Activated B cell treated with CpG ODN at 0.5 μM for 24 hours (primary cell): ENCODE measurements at regions of chr3 and their contacts with region 1.

Region 1: DNA sequence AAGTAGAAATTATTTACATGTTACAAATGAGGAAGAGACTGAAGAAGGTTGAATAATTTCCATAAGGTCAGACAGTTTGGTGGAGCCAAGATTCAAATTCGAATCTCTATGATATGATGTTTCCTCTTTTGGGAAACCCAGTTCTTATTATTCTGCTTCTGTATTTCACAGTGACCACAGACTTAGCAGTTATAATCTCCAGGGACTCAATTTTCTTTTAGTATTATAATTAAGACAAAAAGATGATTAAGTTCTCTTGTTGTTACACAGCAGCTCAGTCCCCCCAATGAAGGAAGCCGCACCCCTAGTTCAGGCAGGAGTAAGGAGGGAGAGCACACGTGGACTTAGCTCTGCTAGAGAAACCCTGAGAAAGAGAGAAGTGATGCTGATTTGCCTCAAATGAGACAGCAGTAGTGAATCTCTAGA is 130.6 kb downstream of the CCNL1 start:
- DNase-seq: peak; percentile 19
- ATAC-seq: peak; percentile 92
- H3K4me3 Mint-ChIP-seq: peak overlapping the region; percentile 15
- H3K27ac Mint-ChIP-seq: peak overlapping the region; percentile 77
- H3K4me1 Mint-ChIP-seq: peaks cover 30% of the 10 kb centered on the region
- H3K27me3 Mint-ChIP-seq: peaks cover 2% of the 10 kb centered on the region
- CTCF ChIP-seq: no peak

Region 2: DNA sequence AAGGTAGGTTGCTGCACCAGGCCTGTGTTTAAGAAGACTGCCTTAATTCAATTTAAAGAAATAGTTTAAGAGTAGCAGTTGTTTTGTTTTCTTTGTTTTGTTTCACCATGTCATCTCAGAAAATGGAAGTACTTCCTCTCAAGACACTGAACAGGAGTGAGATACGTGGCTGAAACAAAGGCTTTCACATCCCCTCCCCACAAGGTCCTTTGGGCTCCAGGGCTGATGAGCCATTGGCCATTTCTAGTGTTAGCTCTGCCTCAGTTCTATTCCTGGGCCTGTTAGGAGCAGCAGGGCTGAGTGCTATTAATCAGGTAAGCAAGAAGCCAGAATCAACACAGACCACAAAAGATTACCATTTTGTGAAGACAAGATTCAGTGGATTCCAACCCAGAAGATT is 776.2 kb before region 1 on chr3:
- CTCF ChIA-PET with region 1: no interaction called
- POLR2A ChIA-PET with region 1: no interaction called
- intact Hi-C with region 1: no loop called
- DNase-seq: no peak
- ATAC-seq: no peak
- H3K4me3 Mint-ChIP-seq: no peak overlapping the region
- H3K27ac Mint-ChIP-seq: no peak overlapping the region
- H3K4me1 Mint-ChIP-seq: no peaks in the 10 kb centered on the region
- H3K27me3 Mint-ChIP-seq: peaks cover 7% of the 10 kb centered on the region
- CTCF ChIP-seq: no peak

Region 3: GRCh38 chr3:156816800-156817645 is 212.4 kb before region 1 on chr3:
- CTCF ChIA-PET with region 1: no interaction called
- POLR2A ChIA-PET with region 1: interaction called, 4 read pairs
- intact Hi-C with region 1: loop called (anchors 1 kb)
- DNase-seq: peak; percentile 93
- ATAC-seq: peak; percentile 83
- H3K4me3 Mint-ChIP-seq: peak overlapping the region; percentile 94
- H3K27ac Mint-ChIP-seq: peak overlapping the region; percentile 99
- H3K4me1 Mint-ChIP-seq: peaks cover 42% of the 10 kb centered on the region
- H3K27me3 Mint-ChIP-seq: no peaks in the 10 kb centered on the region
- CTCF ChIP-seq: no peak

Region 4: DNA sequence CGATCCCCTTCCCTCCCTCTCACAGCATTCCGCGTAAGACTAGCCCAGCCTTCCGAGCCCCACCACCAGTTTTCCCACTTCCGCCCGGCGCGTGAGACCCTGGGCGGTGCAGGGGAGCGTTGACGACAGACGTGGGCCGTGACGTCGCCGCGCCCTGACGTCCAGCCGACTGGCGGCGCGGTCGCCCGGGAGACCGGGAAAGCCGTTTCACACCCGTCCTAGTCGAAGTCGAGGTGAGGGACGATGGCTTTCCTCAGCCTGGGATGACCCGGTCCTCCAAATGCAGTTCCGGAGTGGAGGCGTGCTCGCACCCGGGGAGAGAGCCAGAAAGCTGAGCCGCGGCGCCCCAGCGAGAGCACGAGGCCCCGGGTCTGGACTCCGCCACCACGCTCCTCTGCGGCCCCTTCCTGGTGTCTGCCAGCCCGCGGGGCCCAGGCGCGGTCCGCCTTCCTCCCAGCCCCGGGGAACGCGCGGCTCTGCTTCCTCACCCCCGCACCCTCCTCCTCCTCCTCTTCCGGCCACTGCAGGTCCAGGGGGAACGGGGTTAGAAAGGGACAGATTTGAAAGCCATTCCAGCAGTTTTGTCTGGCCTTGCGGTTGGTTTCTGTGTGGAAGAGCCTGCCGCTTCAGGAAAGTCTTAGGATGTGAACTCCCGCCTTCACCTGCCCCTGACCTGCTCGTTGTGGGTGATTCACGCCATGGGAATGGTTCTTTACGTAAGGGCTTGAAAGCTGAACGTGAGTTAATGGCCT is 203.1 kb before region 1 on chr3 and contains the start of gene LEKR1:
- CTCF ChIA-PET with region 1: no interaction called
- POLR2A ChIA-PET with region 1: no interaction called
- intact Hi-C with region 1: loop called (anchors 1 kb)
- DNase-seq: peak; percentile 74
- ATAC-seq: peak; percentile 73
- H3K4me3 Mint-ChIP-seq: peak within 1 kb of the TSS; percentile 90
- H3K27ac Mint-ChIP-seq: peak within 1 kb of the TSS; percentile 96
- H3K4me1 Mint-ChIP-seq: peaks cover 21% of the 10 kb centered on the region
- H3K27me3 Mint-ChIP-seq: no peaks in the 10 kb centered on the region
- CTCF ChIP-seq: no peak
- total RNA-seq, gene LEKR1: 2.8 and 2.9 TPM in 2 replicates

Region 5: DNA sequence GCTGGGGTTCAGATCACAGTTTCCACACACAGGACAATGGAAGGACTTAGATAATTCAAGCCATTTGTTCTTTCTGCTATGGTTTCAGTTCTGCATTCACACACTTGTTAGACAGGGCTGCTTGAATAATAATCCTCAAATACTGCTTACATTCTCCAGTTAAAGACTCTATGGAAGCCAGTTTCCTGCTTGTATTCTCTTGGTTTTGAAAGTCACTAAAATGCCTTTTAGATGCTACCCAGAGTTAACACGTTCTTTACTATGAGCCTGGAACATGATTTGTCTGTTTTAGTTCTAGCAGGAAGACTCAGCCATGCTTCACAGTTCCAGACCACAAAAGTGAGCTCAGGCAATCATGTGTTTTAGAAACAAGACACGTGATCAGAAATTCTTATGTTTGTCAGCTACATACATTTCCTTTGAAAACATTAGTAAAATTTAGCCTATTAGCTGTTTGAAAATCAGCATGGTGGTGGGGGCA is 50.9 kb before region 1 on chr3:
- CTCF ChIA-PET with region 1: interaction called, 3 read pairs
- POLR2A ChIA-PET with region 1: no interaction called
- intact Hi-C with region 1: loop called (anchors 1 kb)
- DNase-seq: no peak
- ATAC-seq: peak; percentile 90
- H3K4me3 Mint-ChIP-seq: peak overlapping the region; percentile 61
- H3K27ac Mint-ChIP-seq: peak overlapping the region; percentile 95
- H3K4me1 Mint-ChIP-seq: peaks cover 51% of the 10 kb centered on the region
- H3K27me3 Mint-ChIP-seq: no peaks in the 10 kb centered on the region
- CTCF ChIP-seq: no peak

Region 6: GRCh38 chr3:157046520-157046919 is 17.1 kb after region 1 on chr3:
- CTCF ChIA-PET with region 1: interaction called, 3 read pairs
- POLR2A ChIA-PET with region 1: no interaction called
- intact Hi-C with region 1: loop called (anchors 2 kb)
- DNase-seq: no peak
- ATAC-seq: no peak
- H3K4me3 Mint-ChIP-seq: no peak overlapping the region
- H3K27ac Mint-ChIP-seq: no peak overlapping the region
- H3K4me1 Mint-ChIP-seq: peaks cover 23% of the 10 kb centered on the region
- H3K27me3 Mint-ChIP-seq: no peaks in the 10 kb centered on the region
- CTCF ChIP-seq: no peak

Region 7: DNA sequence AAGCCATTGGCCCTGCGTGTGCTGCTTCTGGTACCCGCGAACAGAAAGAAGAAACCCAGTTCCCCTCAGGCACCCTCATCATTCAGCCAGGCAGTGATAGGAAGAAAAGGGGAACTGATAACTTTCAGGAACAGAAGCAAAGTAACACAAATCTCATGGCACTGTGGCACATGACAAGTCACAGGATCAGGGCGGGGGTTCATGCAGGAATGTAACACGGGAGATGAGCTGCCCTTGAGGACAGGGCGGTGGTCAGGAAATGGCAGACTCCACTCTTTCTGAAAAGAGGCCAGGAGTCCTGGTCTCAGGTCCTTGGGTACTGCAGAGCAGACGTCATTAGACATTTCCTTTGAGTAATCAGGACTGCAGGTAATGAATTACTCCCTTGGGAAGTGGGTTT is 35.0 kb after region 1 on chr3:
- CTCF ChIA-PET with region 1: no interaction called
- POLR2A ChIA-PET with region 1: no interaction called
- intact Hi-C with region 1: loop called (anchors 5 kb)
- DNase-seq: no peak
- ATAC-seq: peak; percentile 80
- H3K4me3 Mint-ChIP-seq: peak overlapping the region; percentile 6
- H3K27ac Mint-ChIP-seq: peak overlapping the region; percentile 6
- H3K4me1 Mint-ChIP-seq: peaks cover 31% of the 10 kb centered on the region
- H3K27me3 Mint-ChIP-seq: no peaks in the 10 kb centered on the region
- CTCF ChIP-seq: no peak

Region 8: DNA sequence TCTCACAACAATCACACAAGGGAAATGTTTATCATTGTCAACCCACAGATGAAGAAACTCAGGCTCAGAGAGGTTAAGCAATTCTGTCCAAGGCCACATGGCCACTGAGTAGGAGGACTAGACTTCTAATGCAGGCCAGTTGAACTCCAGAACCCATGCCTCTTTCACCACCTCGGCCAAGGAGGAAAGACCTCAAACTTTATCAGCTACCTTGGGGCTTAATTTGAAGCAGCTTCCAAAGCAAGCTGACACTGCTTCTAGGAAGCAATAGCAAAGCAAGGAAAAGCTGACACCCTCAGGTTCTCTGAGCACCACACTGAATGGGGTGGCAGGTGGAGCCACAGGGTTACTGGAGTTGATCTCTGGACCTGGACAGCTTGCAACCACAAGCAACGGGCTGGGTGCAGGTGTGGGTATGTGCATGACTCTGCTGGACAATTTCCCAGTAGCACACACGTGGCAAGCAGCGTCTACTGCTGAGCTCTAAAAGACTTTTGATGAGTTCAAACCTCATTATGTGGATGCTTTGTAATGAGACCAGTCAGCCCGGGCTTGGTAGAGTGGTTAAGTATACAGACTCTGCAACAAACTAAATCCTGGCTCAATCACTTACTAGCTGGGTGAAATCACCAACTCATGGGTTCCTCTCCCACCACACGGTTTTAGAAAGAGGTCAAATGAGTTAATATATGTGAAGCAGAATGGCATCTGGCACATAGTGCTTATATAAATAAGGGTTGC is 107.4 kb after region 1 on chr3:
- CTCF ChIA-PET with region 1: no interaction called
- POLR2A ChIA-PET with region 1: no interaction called
- intact Hi-C with region 1: loop called (anchors 5 kb)
- DNase-seq: no peak
- ATAC-seq: no peak
- H3K4me3 Mint-ChIP-seq: no peak overlapping the region
- H3K27ac Mint-ChIP-seq: no peak overlapping the region
- H3K4me1 Mint-ChIP-seq: peaks cover 5% of the 10 kb centered on the region
- H3K27me3 Mint-ChIP-seq: no peaks in the 10 kb centered on the region
- CTCF ChIP-seq: no peak